Mammary epithelial cell (primary cell): ENCODE measurements at regions of chr6 and their contacts with region 1.

Region 1: DNA sequence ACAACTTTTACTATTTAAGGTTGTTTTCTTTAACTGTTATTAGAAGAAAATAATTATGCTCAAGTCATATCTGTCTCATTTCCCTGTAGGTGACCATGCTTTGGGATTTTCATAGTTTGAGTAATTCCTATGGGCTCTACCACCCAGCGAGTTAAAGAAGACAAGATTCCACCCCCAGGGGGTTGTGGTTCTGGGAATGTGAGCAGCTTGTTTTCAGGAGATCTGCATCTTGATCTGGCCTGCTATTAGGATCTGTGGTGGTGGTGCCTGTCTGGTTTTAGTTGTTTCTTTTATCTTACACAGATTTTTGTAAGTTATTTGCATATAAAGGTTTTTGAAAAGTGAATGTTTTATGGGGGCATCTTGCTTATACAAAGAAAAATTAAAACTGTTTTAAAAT is 20.2 kb upstream of the REV3L start:
- DNase-seq: no peak
- H3K4me3 ChIP-seq: no peak overlapping the region
- H3K27ac ChIP-seq: no peak overlapping the region
- H3K4me1 ChIP-seq: no peaks in the 10 kb centered on the region
- H3K27me3 ChIP-seq: no peaks in the 10 kb centered on the region
- CTCF ChIP-seq: no peak

Region 2: DNA sequence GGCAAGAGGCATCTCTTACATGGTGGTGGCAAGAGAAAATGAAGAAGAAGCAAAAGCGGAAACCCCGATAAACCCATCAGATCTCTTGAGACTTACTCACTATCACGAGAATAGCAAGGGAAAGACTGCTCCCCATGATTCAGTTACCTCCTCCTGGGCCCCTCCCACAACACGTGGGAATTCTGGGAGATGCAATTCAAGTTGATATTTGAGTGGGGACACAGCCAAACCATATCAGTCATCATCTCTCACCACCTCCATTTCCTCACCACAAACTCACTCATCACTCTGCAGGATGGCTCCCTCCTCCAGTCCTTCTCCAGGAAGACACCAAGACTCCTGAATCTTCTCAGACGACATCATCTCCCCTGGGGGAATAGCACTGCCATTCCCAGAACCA is 441.7 kb before region 1 on chr6:
- CTCF ChIA-PET with region 1: no interaction called
- dilution Hi-C with region 1: no loop called
- in situ Hi-C with region 1: no loop called
- intact Hi-C with region 1: no loop called
- DNase-seq: peak; percentile 34
- H3K4me3 ChIP-seq: no peak overlapping the region
- H3K27ac ChIP-seq: no peak overlapping the region
- H3K4me1 ChIP-seq: no peaks in the 10 kb centered on the region
- H3K27me3 ChIP-seq: peaks cover 1% of the 10 kb centered on the region
- CTCF ChIP-seq: no peak

Region 3: DNA sequence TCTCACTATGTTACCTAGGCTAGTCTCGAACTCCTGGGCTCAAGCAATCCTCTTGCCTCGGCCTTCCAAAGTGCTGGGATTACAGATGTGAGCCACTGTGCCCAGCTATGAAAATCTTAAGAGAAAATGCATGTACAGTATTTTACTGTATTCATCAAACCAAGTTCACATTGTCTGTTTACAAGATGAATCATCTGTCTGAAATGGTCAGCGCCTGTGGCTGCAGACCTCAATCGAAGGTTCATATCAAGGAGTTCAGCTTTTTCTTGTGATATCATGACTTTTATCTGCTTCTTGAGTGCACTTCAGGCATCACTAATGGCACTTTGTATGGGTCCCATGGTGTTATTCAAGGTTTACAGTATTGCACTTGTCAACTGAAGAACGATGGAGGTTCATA is 260.8 kb before region 1 on chr6:
- CTCF ChIA-PET with region 1: no interaction called
- dilution Hi-C with region 1: no loop called
- in situ Hi-C with region 1: no loop called
- intact Hi-C with region 1: no loop called
- DNase-seq: no peak
- H3K4me3 ChIP-seq: no peak overlapping the region
- H3K27ac ChIP-seq: no peak overlapping the region
- H3K4me1 ChIP-seq: peaks cover 6% of the 10 kb centered on the region
- H3K27me3 ChIP-seq: peaks cover 2% of the 10 kb centered on the region
- CTCF ChIP-seq: no peak

Region 4: DNA sequence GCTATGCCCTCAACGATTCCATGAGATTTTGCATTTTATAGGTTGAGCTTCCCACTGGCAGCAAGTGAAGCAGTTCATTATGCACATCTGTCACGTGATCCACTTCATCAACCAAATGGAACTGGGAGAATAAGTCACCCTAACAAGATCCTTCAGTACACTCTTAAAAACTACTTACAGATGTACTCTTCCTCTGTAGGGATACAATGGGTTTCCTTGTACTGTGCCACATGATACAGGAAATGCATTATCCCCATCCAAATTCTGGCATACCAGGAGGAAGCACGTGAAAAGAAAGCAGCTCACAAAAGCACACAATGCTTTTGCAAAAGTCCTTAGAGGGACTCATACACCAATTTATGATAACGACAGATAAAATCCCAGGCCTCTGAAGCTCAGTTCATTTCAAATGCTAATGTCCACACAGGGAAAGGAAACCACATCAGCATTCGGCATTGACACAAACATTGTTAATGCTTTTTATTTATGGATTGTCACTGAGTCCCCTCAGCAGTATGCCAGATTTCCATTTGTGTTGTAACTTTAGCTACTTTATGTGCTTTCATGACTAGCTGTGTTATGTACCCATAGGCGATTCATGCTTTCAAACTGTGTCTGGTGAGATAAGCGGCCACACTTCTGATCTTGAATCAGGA is 37.9 kb after region 1 on chr6:
- CTCF ChIA-PET with region 1: no interaction called
- dilution Hi-C with region 1: no loop called
- in situ Hi-C with region 1: no loop called
- intact Hi-C with region 1: loop called (anchors 5 kb)
- DNase-seq: no peak
- H3K4me3 ChIP-seq: no peak overlapping the region
- H3K27ac ChIP-seq: no peak overlapping the region
- H3K4me1 ChIP-seq: no peaks in the 10 kb centered on the region
- H3K27me3 ChIP-seq: no peaks in the 10 kb centered on the region
- CTCF ChIP-seq: no peak